ENCODE measurements at regions of chr7 and their contacts with region 1.

Region 1: GRCh38 chr7:119935418-119936025 is 337.5 kb upstream of the KCND2 start:
- DNase-seq: peak; percentile 2
- H3K4me3 ChIP-seq: no peak overlapping the region
- H3K27ac ChIP-seq: no peak overlapping the region
- H3K4me1 ChIP-seq: no peaks in the 10 kb centered on the region
- H3K27me3 ChIP-seq: no peaks in the 10 kb centered on the region
- CTCF ChIP-seq: peak; percentile 33 to 55

Region 2: DNA sequence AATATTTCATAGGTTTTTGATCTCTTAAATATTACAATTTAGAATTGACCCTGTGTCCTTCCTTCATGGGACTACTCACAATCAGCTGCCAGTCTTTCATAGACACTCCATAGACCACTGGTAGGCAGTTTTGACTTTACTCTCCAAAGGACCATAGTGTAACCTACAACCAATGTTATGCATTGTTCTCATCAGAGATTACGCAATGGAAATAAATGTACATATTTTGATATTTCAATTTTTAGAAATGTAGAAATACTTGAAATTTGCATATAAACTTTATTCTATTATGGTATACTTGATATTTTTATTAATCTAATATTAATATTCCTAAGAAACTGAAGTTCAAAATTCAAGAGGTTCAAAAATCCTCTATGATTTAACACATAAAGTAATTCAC is 109.0 kb before region 1 on chr7:
- CTCF ChIA-PET with region 1: no interaction called
- dilution Hi-C with region 1: no loop called
- in situ Hi-C with region 1: no loop called
- intact Hi-C with region 1: no loop called
- DNase-seq: no peak
- H3K4me3 ChIP-seq: no peak overlapping the region
- H3K27ac ChIP-seq: no peak overlapping the region
- H3K4me1 ChIP-seq: no peaks in the 10 kb centered on the region
- H3K27me3 ChIP-seq: no peaks in the 10 kb centered on the region
- CTCF ChIP-seq: no peak

Region 3: GRCh38 chr7:119919986-119920385 is 15.5 kb before region 1 on chr7:
- CTCF ChIA-PET with region 1: no interaction called
- dilution Hi-C with region 1: no loop called
- in situ Hi-C with region 1: no loop called
- intact Hi-C with region 1: no loop called
- DNase-seq: no peak
- H3K4me3 ChIP-seq: no peak overlapping the region
- H3K27ac ChIP-seq: no peak overlapping the region
- H3K4me1 ChIP-seq: no peaks in the 10 kb centered on the region
- H3K27me3 ChIP-seq: no peaks in the 10 kb centered on the region
- CTCF ChIP-seq: no peak

Region 4: GRCh38 chr7:120272261-120272660 is 336.7 kb after region 1 on chr7:
- CTCF ChIA-PET with region 1: no interaction called
- dilution Hi-C with region 1: no loop called
- in situ Hi-C with region 1: loop called (anchors 25 kb)
- intact Hi-C with region 1: loop called (anchors 1 kb)
- DNase-seq: peak; percentile 29
- H3K4me3 ChIP-seq: peak overlapping the region; percentile 24 to 43 (median 38)
- H3K27ac ChIP-seq: no peak overlapping the region
- H3K4me1 ChIP-seq: peaks cover 8% of the 10 kb centered on the region
- H3K27me3 ChIP-seq: peaks cover 10% of the 10 kb centered on the region
- CTCF ChIP-seq: peak; percentile 58 to 77

Region 5: DNA sequence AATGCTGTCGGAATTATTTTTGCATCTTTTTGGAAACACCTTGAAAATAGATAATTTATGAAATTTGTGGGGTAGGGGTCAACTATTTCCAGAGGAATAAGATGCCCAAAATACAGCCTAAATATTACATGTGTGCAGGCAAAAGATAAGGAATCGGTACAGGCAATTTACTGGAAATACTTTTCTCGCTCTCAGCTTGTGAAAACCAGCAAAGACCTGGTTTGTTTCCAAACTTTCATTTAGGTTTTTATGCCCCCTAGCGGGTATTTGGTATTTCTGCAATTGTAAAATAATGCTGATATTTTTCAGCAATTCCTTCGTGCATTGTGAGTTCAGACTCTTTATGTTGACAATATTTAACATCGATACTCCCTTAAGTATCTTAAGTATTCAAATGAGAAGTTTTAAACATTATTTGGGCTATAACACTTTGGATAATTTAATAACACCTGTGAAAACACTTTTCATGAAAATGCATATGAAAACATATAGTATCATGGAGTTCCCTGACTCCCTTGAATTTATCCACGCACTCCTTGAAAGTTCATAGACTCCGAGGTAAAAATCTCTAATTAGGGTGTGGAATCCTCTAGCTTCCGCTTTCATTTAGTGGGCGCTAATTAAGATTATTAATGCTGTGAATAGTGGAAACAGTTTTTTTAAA is 790.0 kb after region 1 on chr7:
- CTCF ChIA-PET with region 1: interaction called, 4 read pairs
- dilution Hi-C with region 1: no loop called
- in situ Hi-C with region 1: no loop called
- intact Hi-C with region 1: loop called (anchors 2 kb)
- DNase-seq: no peak
- H3K4me3 ChIP-seq: no peak overlapping the region
- H3K27ac ChIP-seq: no peak overlapping the region
- H3K4me1 ChIP-seq: no peaks in the 10 kb centered on the region
- H3K27me3 ChIP-seq: no peaks in the 10 kb centered on the region
- CTCF ChIP-seq: peak; percentile 58 to 61

Measured in mammary epithelial cell (primary cell).